ENCODE measurements at regions of chr6 and their contacts with region 1.

Region 1: DNA sequence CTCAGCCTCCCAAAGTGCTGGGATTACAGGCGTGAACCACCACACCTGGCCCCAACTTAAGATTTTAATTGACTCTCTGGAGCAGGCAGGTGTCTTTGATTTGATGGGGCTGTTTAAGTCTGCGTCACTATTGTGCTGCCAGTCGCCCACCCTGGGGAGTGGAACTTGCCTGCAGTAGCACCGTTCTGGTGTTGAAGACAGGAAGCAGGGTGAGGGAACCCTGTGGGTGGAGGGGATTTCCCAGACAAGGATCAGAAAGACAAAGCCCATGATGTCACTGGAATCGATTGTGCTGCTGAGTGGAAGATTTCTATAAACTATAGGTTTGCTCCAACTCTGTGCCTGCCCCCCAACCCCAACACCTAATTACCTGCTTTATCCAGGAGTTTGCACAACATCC is 11.0 kb downstream of the ALDH8A1 start:
- DNase-seq: no peak
- ATAC-seq: no peak
- H3K4me3 ChIP-seq: no peak overlapping the region
- H3K27ac ChIP-seq: no peak overlapping the region
- H3K4me1 ChIP-seq: no peaks in the 10 kb centered on the region
- H3K27me3 ChIP-seq: no peaks in the 10 kb centered on the region
- CTCF ChIP-seq: no peak
- POLR2A ChIP-seq: no peak

Region 2: DNA sequence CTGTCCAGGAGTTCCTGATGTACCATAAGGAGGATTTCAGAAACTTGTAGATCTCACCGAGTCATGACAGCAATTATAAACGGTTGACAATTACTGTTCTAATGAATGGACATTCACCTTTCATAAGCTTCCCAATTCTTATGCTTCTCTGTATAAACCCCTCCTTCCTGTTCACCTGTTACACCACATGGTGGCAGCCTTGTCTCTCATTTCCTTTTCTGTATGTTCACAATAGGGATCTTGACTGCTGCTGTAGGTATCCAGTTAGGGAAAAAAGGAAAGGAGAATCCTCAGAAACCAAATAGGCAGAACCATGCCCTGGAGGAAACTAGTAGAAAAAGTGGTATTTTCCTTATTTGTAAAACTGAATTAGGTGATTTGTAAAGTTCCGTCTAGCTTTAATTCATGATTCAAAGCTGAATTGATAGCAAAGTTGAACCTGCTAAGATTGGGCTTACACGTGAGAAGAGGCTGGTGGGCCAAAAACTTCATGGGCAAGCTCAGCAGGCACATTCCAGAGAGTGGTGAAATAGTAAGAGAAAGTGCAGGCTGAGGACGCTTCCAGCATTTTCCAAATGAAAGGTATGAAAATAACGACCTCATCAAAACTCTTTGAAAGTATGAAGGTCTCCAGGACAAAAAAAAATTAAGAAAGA is 1014.8 kb before region 1 on chr6:
- intact Hi-C with region 1: loop called in 1 of 10 experiments (anchors 10 kb)
- DNase-seq: peak in 4 of 5 donors; percentile 45 to 60 (median 54)
- ATAC-seq: peak; percentile 80 to 95 (median 92)
- H3K4me3 ChIP-seq: no peak overlapping the region
- H3K27ac ChIP-seq: no peak overlapping the region
- H3K4me1 ChIP-seq: peaks cover 0 to 2% (median 0%) of the 10 kb centered on the region in 12 donors
- H3K27me3 ChIP-seq: peaks cover 0 to 9% (median 0%) of the 10 kb centered on the region in 9 donors
- CTCF ChIP-seq: peak; percentile 74 to 93 (median 84)
- POLR2A ChIP-seq: no peak

Region 3: GRCh38 chr6:134117370-134117807 is 821.5 kb before region 1 on chr6:
- intact Hi-C with region 1: loop called in 5 of 10 experiments (anchors 2 to 5 kb)
- DNase-seq: no peak
- ATAC-seq: no peak
- H3K4me3 ChIP-seq: no peak overlapping the region
- H3K27ac ChIP-seq: no peak overlapping the region
- H3K4me1 ChIP-seq: no peaks in the 10 kb centered on the region
- H3K27me3 ChIP-seq: peaks cover 0 to 14% (median 4%) of the 10 kb centered on the region in 9 donors
- CTCF ChIP-seq: no peak
- POLR2A ChIP-seq: no peak

Region 4: GRCh38 chr6:134152767-134153485 is 786.0 kb before region 1 on chr6:
- intact Hi-C with region 1: loop called (anchors 2 to 10 kb)
- DNase-seq: no peak
- ATAC-seq: peak in 1 of 4 donors; percentile 22
- H3K4me3 ChIP-seq: no peak overlapping the region
- H3K27ac ChIP-seq: no peak overlapping the region
- H3K4me1 ChIP-seq: peaks cover 0 to 3% (median 0%) of the 10 kb centered on the region in 12 donors
- H3K27me3 ChIP-seq: no peaks in the 10 kb centered on the region
- CTCF ChIP-seq: no peak
- POLR2A ChIP-seq: no peak

Region 5: DNA sequence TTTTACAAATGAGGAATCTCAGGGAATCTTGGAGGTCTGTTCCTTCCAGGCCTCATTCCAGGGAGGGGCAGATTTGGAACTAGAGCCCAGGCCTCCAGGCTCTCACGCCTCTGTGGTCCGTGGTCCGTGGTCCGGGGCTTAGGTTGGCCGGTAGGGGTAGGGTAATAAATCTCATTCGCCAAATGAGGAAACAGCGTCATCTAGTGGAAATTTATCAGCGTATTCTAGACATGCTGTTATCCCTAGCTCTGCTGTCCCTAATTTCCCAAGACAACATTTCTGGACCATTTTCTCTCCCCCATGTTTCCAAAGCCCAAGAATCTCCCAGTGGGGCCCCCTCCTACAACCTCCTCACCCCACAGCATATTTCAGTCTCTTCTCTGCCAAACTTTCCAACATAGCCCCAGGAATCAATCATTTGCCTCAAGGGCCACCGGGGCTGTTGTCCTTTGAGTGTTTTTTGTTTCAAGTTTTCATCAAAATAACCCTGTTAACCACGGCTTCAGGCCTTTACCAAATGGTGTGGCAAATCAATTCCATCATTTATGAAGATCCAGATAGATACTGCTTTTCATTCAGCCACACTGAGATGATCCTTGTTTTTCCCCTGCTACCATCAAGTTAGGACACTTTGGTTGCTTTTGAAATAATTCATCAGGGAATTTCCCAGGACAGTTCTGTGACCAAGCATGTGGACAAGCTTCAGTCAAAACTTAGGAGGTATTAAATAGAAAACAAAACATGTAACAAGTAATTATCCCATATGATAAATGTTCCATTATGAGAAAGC is 115.8 kb before region 1 on chr6:
- intact Hi-C with region 1: loop called in 1 of 10 experiments (anchors 10 kb)
- DNase-seq: peak in 4 of 5 donors; percentile 28 to 55 (median 38)
- ATAC-seq: peak; percentile 84 to 92 (median 90)
- H3K4me3 ChIP-seq: no peak overlapping the region
- H3K27ac ChIP-seq: no peak overlapping the region
- H3K4me1 ChIP-seq: peaks cover 0 to 19% (median 1%) of the 10 kb centered on the region in 12 donors
- H3K27me3 ChIP-seq: no peaks in the 10 kb centered on the region
- CTCF ChIP-seq: peak; percentile 85 to 94 (median 88)
- POLR2A ChIP-seq: no peak

Region 6: GRCh38 chr6:134882426-134883038 is 56.4 kb before region 1 on chr6:
- intact Hi-C with region 1: no loop called
- DNase-seq: peak in 4 of 5 donors; percentile 21 to 67 (median 49)
- ATAC-seq: peak in 3 of 4 donors; percentile 36 to 68 (median 65)
- H3K4me3 ChIP-seq: no peak overlapping the region
- H3K27ac ChIP-seq: no peak overlapping the region
- H3K4me1 ChIP-seq: peaks cover 0 to 5% (median 0%) of the 10 kb centered on the region in 12 donors
- H3K27me3 ChIP-seq: peaks cover 0 to 3% (median 0%) of the 10 kb centered on the region in 9 donors
- CTCF ChIP-seq: peak; percentile 52 to 99 (median 88)
- POLR2A ChIP-seq: no peak

Region 7: GRCh38 chr6:134995536-134995935 is 56.6 kb after region 1 on chr6:
- intact Hi-C with region 1: no loop called
- DNase-seq: no peak
- ATAC-seq: no peak
- H3K4me3 ChIP-seq: no peak overlapping the region
- H3K27ac ChIP-seq: no peak overlapping the region
- H3K4me1 ChIP-seq: no peaks in the 10 kb centered on the region
- H3K27me3 ChIP-seq: no peaks in the 10 kb centered on the region
- CTCF ChIP-seq: no peak
- POLR2A ChIP-seq: no peak

Region 8: DNA sequence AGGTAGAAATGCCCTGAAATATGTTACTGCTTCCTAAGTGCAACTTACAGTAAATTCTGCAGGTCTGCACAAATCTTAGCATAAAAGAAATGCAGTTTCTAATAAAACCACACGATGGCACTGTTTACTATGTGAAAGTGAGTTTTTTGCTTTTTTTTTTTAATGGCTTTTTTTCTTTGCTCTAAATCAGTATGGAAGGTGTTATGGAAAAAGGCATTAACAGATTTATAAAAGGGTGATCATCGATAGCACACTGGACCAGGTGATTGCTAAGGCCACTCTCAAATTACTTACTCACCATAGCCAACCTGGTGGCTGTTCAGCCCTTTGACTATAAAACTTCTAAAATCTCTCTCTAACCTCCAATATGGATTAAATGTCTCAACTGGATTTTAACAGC is 512.8 kb after region 1 on chr6:
- intact Hi-C with region 1: no loop called
- DNase-seq: no peak
- ATAC-seq: no peak
- H3K4me3 ChIP-seq: no peak overlapping the region
- H3K27ac ChIP-seq: no peak overlapping the region
- H3K4me1 ChIP-seq: no peaks in the 10 kb centered on the region
- H3K27me3 ChIP-seq: no peaks in the 10 kb centered on the region
- CTCF ChIP-seq: peak; percentile 57 to 80 (median 68)
- POLR2A ChIP-seq: no peak